ENCODE measurements at regions of chr6 and their contacts with region 1.

Region 1: GRCh38 chr6:71012866-71013469 is 56.1 kb upstream of the B3GAT2 start:
- DNase-seq: no peak
- H3K4me3 Mint-ChIP-seq: no peak overlapping the region
- H3K27ac Mint-ChIP-seq: no peak overlapping the region
- H3K4me1 Mint-ChIP-seq: no peaks in the 10 kb centered on the region
- H3K27me3 Mint-ChIP-seq: peaks cover 4% of the 10 kb centered on the region

Region 2: GRCh38 chr6:70310063-70310694 is 702.8 kb before region 1 on chr6:
- intact Hi-C with region 1: loop called (anchors 10 kb)
- DNase-seq: no peak
- H3K4me3 Mint-ChIP-seq: no peak overlapping the region
- H3K27ac Mint-ChIP-seq: no peak overlapping the region
- H3K4me1 Mint-ChIP-seq: peaks cover 14% of the 10 kb centered on the region
- H3K27me3 Mint-ChIP-seq: peaks cover 33% of the 10 kb centered on the region

Region 3: DNA sequence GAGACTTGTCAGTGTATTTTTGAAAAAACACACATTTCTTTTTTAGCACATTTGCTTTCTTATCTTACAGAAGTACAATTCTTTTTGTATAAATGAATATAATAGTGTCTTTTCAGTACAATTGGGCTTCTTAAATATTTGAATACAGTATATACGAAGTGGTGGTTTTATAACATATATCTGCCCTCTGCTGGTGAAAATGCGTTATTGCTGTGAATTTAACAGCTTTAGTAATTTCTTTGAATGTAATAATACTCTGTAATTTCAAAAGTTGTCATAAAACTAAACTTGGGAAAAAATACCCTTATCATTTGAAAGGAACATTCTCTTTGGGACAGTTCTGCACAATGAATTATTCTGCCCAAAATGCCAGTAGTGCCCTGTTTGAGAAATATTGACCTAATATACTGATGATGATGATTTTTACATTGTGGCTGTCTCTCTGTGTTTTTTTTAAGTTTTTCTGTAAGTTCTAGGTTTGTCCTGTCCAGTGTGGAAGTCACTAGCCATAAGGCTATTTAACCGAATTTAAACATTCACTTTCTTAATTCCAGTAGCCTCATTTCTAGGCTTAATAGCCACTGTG is 326.3 kb before region 1 on chr6:
- intact Hi-C with region 1: loop called (anchors 5 kb)
- DNase-seq: no peak
- H3K4me3 Mint-ChIP-seq: no peak overlapping the region
- H3K27ac Mint-ChIP-seq: no peak overlapping the region
- H3K4me1 Mint-ChIP-seq: peaks cover 25% of the 10 kb centered on the region
- H3K27me3 Mint-ChIP-seq: no peaks in the 10 kb centered on the region

Region 4: DNA sequence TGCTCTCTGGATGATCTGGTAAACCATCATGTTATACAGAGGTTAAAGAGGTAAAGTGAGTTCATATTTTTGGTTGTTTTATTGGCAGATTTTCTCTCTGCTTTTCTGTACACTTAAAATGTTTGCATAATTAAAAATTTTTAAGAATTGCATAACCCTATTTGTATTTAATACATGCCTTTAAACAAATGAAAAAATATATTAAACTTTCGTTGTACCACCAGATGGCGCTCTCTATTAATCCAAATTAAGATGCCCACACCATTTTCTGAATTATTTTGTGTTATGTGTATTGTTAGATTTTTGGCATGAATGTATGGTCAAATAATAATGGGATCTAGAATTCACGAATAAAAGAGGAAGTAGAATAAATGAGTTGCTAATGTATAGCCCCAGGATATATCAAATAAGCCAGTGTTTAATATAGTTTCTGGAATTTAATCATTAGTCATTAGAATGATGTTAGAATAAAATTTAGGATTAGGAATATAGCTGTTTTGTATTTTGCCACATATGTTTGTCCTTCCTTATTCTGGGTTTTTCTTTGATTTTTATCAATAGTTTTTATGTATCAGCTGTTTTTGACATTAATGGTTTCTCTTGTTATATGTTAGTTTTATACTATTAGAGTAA is 306.4 kb before region 1 on chr6:
- intact Hi-C with region 1: loop called (anchors 2 kb)
- DNase-seq: no peak
- H3K4me3 Mint-ChIP-seq: no peak overlapping the region
- H3K27ac Mint-ChIP-seq: no peak overlapping the region
- H3K4me1 Mint-ChIP-seq: peaks cover 19% of the 10 kb centered on the region
- H3K27me3 Mint-ChIP-seq: no peaks in the 10 kb centered on the region

Region 5: DNA sequence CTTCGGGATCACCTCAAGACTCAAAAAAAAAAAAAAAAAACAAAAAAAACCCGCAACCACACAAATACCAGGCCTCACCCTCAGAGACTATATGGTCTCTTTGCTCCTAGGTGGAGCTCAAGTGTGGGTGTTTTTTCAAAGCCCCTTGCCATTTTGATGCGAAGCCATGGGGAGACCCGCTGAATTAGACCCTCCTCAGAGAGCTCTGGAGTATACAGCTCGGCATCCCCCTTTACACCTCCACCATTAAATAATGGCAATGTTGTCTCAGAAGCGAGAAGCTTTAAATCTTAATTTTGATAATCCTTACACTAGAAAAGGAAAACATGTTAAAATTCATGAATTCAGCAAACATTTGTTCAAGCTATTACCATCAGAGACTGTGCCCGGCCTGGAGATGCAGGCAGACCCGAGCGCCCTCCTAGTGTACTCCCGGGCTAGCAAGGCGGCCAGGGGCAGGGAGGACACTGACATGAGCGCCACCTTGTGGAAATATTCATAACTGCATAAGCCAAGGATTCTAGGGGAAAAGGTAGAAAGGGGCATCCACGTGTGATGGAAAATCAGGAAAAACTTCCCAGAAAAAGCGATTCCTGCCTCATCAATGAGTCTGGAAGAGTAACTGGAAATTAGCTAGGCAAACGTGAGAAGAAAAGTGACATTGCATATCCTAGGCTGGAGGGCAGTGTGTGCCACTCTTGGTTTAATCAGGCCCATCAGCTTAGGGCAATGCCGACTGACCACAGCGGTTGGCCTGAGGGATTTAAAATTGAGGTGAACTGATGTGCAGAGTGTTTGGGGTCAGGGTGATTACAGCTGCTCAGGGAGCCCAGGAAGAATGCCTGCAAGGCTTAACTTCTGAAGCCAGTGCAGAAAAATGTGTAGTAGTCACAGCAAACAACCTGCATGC is 128.6 kb before region 1 on chr6:
- intact Hi-C with region 1: loop called (anchors 5 kb)
- DNase-seq: peak; percentile 29
- H3K4me3 Mint-ChIP-seq: no peak overlapping the region
- H3K27ac Mint-ChIP-seq: no peak overlapping the region
- H3K4me1 Mint-ChIP-seq: no peaks in the 10 kb centered on the region
- H3K27me3 Mint-ChIP-seq: peaks cover 5% of the 10 kb centered on the region

Region 6: GRCh38 chr6:70973604-70974003 is 39.4 kb before region 1 on chr6:
- intact Hi-C with region 1: no loop called
- DNase-seq: no peak
- H3K4me3 Mint-ChIP-seq: no peak overlapping the region
- H3K27ac Mint-ChIP-seq: no peak overlapping the region
- H3K4me1 Mint-ChIP-seq: no peaks in the 10 kb centered on the region
- H3K27me3 Mint-ChIP-seq: no peaks in the 10 kb centered on the region

Region 7: DNA sequence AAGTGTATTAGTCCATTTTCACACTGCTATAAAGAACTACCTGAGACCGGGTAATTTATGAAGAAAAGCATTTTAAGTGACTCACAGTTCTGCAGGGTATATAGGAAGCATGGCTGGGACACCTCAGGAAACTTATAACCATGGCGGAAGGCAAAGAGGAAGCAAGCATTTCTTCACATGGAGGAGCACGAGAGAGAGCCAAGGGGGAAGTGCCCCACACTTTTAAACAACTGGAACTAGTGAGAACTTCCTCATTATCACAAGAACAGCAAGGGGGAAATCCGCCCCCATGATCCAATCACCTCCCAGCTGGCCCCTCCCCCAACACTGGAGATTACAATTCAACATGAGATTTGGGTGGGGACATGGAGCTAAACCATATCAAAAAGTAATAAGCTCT is 27.8 kb before region 1 on chr6:
- intact Hi-C with region 1: no loop called
- DNase-seq: no peak
- H3K4me3 Mint-ChIP-seq: no peak overlapping the region
- H3K27ac Mint-ChIP-seq: no peak overlapping the region
- H3K4me1 Mint-ChIP-seq: no peaks in the 10 kb centered on the region
- H3K27me3 Mint-ChIP-seq: peaks cover 1% of the 10 kb centered on the region

Region 8: DNA sequence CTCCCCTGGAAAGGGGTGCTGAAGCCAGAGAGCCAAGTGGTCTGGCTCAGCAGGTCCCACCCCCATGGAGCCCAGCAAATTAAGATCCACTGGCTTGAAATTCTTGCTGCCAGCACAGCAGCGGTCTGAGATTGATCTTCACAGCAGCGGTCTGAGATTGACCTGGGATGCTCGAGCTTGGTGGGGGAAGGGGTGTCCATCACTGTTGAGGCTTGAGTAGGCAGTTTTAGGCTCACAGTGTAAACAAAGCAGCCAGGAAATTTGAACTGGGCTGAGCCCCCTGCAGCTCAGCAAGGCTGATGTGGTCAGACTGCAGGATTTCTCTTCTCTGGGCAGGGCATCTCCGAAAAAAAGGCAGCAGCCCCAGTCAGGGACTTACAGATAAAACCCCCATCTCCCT is 14.8 kb before region 1 on chr6:
- intact Hi-C with region 1: no loop called
- DNase-seq: no peak
- H3K4me3 Mint-ChIP-seq: no peak overlapping the region
- H3K27ac Mint-ChIP-seq: no peak overlapping the region
- H3K4me1 Mint-ChIP-seq: no peaks in the 10 kb centered on the region
- H3K27me3 Mint-ChIP-seq: peaks cover 4% of the 10 kb centered on the region